GM12878 (cell line): ENCODE measurements at regions of chr1 and their contacts with region 1.

Region 1: DNA sequence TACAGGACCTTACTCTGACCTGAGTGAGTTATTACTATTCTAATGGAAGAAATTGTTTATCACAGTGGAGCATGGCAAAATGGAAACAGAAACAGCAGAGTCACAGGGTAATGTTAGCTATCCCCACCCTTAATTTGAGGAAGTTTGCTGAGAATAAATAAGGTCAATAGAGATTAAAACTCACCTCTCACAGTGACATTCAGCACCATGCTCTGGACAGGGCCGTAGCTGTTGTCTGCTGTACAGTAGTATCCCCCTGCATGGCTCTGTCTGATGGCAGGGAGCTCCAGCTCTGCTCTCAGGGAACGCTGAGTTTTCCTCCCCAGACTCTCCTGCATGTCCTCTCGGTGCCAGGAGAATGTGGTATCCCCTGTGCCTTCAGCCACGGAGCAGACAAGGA is 11.9 kb downstream of the FCRL4 start:
- DNase-seq: no peak
- ATAC-seq: peak; percentile 61
- H3K4me3 ChIP-seq: no peak overlapping the region
- H3K27ac ChIP-seq: no peak overlapping the region
- H3K4me1 ChIP-seq: no peaks in the 10 kb centered on the region
- H3K27me3 ChIP-seq: peaks cover 1 to 13% of the 10 kb centered on the region in 2 experiments; a peak in 2 of 4 replicates
- CTCF ChIP-seq: no peak
- EP300 ChIP-seq: no peak
- POLR2A ChIP-seq: no peak
- RAD21 ChIP-seq: no peak

Region 2: GRCh38 chr1:157477419-157477818 is 108.6 kb before region 1 on chr1:
- CTCF ChIA-PET with region 1: no interaction called
- POLR2A ChIA-PET with region 1: no interaction called
- RAD21 ChIA-PET with region 1: no interaction called
- SMC1A ChIA-PET with region 1: no interaction called
- in situ Hi-C with region 1: no loop called
- intact Hi-C with region 1: no loop called
- DNase-seq: no peak
- ATAC-seq: no peak
- H3K4me3 ChIP-seq: no peak overlapping the region
- H3K27ac ChIP-seq: no peak overlapping the region
- H3K4me1 ChIP-seq: no peaks in the 10 kb centered on the region
- H3K27me3 ChIP-seq: peaks cover 0 to under 1% of the 10 kb centered on the region in 2 experiments; a peak in 1 of 4 replicates
- CTCF ChIP-seq: no peak
- EP300 ChIP-seq: no peak
- POLR2A ChIP-seq: no peak
- RAD21 ChIP-seq: no peak

Region 3: GRCh38 chr1:157691285-157691920 is 105.4 kb after region 1 on chr1:
- CTCF ChIA-PET with region 1: interaction called, 190 read pairs
- POLR2A ChIA-PET with region 1: no interaction called
- RAD21 ChIA-PET with region 1: interaction called, 41 read pairs
- SMC1A ChIA-PET with region 1: interaction called, 103 read pairs
- in situ Hi-C with region 1: no loop called
- intact Hi-C with region 1: no loop called
- DNase-seq: no peak
- ATAC-seq: peak; percentile 73
- H3K4me3 ChIP-seq: no peak overlapping the region
- H3K27ac ChIP-seq: no peak overlapping the region
- H3K4me1 ChIP-seq: no peaks in the 10 kb centered on the region
- H3K27me3 ChIP-seq: peaks cover 0 to 2% of the 10 kb centered on the region in 2 experiments; a peak in 1 of 4 replicates
- CTCF ChIP-seq: peak; percentile 58 to 73 (median 67)
- EP300 ChIP-seq: no peak
- POLR2A ChIP-seq: no peak
- RAD21 ChIP-seq: peak; percentile 59